Endothelial cell of umbilical vein (primary cell): ENCODE measurements at regions of chr13 and their contacts with region 1.

Region 1: DNA sequence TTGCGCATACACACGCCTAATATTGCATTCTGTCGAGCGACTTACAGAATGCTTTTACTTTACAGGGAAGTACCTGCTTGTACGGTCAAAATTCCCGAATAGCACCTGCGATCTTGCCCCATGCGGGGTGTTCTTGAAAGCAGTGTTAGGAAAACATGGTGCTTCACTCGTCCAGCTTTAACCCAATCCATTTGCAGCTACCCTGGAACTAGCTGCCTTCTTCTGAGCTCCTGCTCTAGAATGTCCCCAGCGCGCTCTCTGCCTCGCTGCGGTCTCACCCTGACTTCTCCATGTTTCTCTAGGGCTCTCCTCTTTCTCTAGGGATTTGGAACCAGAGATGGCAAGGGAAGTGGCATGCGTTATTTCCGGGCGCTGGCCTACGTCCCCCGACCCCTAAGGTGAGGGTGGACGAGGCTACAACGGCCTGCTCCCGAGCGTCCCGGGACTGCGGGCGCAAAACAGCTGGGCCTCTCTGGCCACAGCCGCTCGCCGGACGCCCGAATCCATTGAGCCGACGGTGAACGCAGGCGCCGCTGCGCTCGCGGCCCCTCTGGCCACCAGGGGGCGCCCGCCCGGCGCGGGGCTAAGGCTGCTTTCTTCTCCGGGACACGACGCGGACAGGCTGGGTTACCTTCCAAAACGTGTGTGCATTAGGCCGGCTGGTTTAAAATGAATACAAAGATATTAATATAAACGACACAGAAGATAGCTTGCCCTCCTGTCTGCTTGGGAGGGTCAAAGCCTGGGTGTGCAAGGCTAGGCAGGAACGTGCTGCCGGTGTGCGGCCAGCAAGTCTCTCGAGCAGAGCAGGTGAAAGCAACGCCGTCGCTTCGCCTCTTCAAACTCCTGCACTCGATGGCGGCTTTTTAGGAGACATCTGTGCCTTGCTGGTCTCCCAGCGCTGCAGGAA is 1.8 kb upstream of the SPRY2 start:
- DNase-seq: peak; percentile 83
- H3K4me3 ChIP-seq: peak overlapping the region; percentile 30 to 77 (median 75)
- H3K27ac ChIP-seq: peak overlapping the region; percentile 82
- H3K4me1 ChIP-seq: peaks cover 17% of the 10 kb centered on the region
- H3K27me3 ChIP-seq: no peaks in the 10 kb centered on the region
- CTCF ChIP-seq: peak; percentile 97 to 98
- POLR2A ChIP-seq: no peak

Region 2: DNA sequence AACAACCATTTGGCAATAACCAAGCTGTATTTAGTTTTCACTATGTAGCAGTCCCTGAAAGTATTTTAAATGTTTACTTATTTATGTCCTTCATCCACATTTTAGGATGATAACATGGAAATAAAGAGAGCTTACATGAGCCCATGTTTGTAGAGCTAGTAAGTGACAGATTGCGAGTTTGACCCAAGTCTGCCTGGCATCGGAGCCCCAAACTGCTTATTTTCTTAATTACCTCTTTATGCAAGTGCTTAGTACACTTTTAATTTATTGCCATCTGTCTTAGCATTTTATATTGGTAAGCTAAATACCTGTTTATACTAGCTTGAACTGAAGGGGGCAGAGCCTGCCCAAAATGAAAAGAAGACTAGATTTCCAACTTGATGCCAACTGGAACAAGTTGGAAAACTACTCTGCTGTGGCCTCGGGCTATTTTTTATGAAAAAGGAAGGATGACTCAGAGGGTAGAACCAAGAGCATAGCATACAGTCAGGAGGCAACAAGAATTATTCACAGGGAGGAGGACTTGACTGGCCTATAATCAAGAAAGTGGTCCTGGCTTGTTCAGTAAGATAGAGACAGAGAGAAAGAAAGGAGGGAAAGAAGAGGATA is 711.6 kb before region 1 on chr13:
- CTCF ChIA-PET with region 1: interaction called, 4 read pairs
- POLR2A ChIA-PET with region 1: no interaction called
- dilution Hi-C with region 1: no loop called
- intact Hi-C with region 1: loop called (anchors 5 kb)
- DNase-seq: peak; percentile 93
- H3K4me3 ChIP-seq: no peak overlapping the region
- H3K27ac ChIP-seq: no peak overlapping the region
- H3K4me1 ChIP-seq: no peaks in the 10 kb centered on the region
- H3K27me3 ChIP-seq: no peaks in the 10 kb centered on the region
- CTCF ChIP-seq: peak in 1 of 2 donors; percentile 27
- POLR2A ChIP-seq: no peak

Region 3: GRCh38 chr13:79782541-79783205 is 560.1 kb before region 1 on chr13:
- CTCF ChIA-PET with region 1: interaction called, 11 read pairs
- POLR2A ChIA-PET with region 1: interaction called, 4 read pairs
- dilution Hi-C with region 1: no loop called
- intact Hi-C with region 1: loop called (anchors 1 kb)
- DNase-seq: peak; percentile 93
- H3K4me3 ChIP-seq: no peak overlapping the region
- H3K27ac ChIP-seq: peak overlapping the region; percentile 19
- H3K4me1 ChIP-seq: peaks cover 16% of the 10 kb centered on the region
- H3K27me3 ChIP-seq: no peaks in the 10 kb centered on the region
- CTCF ChIP-seq: no peak
- POLR2A ChIP-seq: no peak

Region 4: DNA sequence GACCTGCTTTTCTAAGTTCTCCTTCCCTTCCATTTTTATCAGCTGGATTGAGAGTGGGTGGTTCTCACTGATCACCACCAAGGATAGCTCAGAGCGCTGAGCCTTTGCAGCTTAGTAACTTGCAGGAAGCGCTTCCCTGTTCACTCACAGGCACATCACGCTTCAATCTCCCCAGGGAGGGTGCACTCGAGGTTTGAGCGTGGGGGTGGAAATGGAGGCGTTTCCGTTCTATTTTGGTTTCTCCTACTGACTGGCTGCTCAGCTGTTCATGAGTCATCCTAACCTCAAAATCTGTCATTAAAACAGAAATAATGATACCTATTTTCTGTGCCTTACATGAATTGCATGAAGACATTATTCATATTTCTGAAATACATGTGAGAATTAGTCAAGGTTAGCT is 293.9 kb before region 1 on chr13:
- CTCF ChIA-PET with region 1: interaction called, 11 read pairs
- POLR2A ChIA-PET with region 1: no interaction called
- dilution Hi-C with region 1: loop called (anchors 25 kb)
- intact Hi-C with region 1: no loop called
- DNase-seq: peak; percentile 91
- H3K4me3 ChIP-seq: no peak overlapping the region
- H3K27ac ChIP-seq: peak overlapping the region; percentile 36
- H3K4me1 ChIP-seq: peaks cover 26% of the 10 kb centered on the region
- H3K27me3 ChIP-seq: no peaks in the 10 kb centered on the region
- CTCF ChIP-seq: no peak
- POLR2A ChIP-seq: no peak

Region 5: GRCh38 chr13:80276371-80277289 is 66.1 kb before region 1 on chr13:
- CTCF ChIA-PET with region 1: interaction called, 4 read pairs
- POLR2A ChIA-PET with region 1: interaction called, 3 read pairs
- dilution Hi-C with region 1: no loop called
- intact Hi-C with region 1: loop called (anchors 1 kb)
- DNase-seq: peak; percentile 79
- H3K4me3 ChIP-seq: no peak overlapping the region
- H3K27ac ChIP-seq: peak overlapping the region; percentile 48
- H3K4me1 ChIP-seq: peaks cover 12% of the 10 kb centered on the region
- H3K27me3 ChIP-seq: no peaks in the 10 kb centered on the region
- CTCF ChIP-seq: peak in 1 of 2 donors; percentile 14
- POLR2A ChIP-seq: no peak

Region 6: GRCh38 chr13:80873589-80873988 is 530.9 kb after region 1 on chr13:
- CTCF ChIA-PET with region 1: interaction called, 6 read pairs
- POLR2A ChIA-PET with region 1: no interaction called
- dilution Hi-C with region 1: no loop called
- intact Hi-C with region 1: loop called (anchors 1 kb)
- DNase-seq: no peak
- H3K4me3 ChIP-seq: no peak overlapping the region
- H3K27ac ChIP-seq: no peak overlapping the region
- H3K4me1 ChIP-seq: peaks cover 9% of the 10 kb centered on the region
- H3K27me3 ChIP-seq: no peaks in the 10 kb centered on the region
- CTCF ChIP-seq: no peak
- POLR2A ChIP-seq: no peak

Region 7: DNA sequence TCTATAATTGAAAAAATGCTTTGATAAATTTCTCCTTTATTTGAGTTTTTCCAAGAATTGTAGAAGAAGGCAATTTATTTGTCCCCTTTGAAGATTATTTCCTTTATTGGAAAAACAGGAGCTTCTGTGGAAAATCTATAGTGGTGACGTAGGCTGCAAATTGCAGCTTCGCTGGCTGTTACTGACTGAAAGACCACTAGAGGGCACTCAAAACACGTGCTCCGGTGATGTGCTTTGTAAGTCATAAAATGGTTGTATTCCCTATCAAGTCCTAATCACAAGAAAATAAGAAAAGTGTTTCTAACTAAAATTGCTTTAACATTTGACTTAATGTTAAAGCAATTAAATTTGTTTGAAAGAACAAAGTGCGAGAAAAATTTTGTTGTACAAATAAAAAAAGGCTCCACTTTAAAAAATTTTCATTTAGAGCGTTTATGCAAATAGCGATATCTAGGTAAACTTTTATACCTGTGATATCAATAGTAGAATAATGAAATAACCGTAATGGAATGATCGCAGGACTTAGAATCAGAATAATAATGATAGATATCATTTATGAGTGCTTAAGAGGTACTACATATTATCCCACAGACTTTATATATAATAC is 636.4 kb after region 1 on chr13:
- CTCF ChIA-PET with region 1: interaction called, 41 read pairs
- POLR2A ChIA-PET with region 1: no interaction called
- dilution Hi-C with region 1: no loop called
- intact Hi-C with region 1: no loop called
- DNase-seq: peak; percentile 73
- H3K4me3 ChIP-seq: no peak overlapping the region
- H3K27ac ChIP-seq: no peak overlapping the region
- H3K4me1 ChIP-seq: no peaks in the 10 kb centered on the region
- H3K27me3 ChIP-seq: no peaks in the 10 kb centered on the region
- CTCF ChIP-seq: peak; percentile 78 to 86
- POLR2A ChIP-seq: no peak